ENCODE measurements at regions of chr19 and their contacts with region 1.

Region 1: GRCh38 chr19:13880059-13881043 is 3.4 kb downstream of the NANOS3 start:
- DNase-seq: peak; percentile 95 to 96 (median 96)
- H3K4me3 ChIP-seq: peak overlapping the region in 1 of 2 donors; percentile 25
- H3K4me3 Mint-ChIP-seq: peak overlapping the region; percentile 56 to 85 (median 66)
- H3K27ac ChIP-seq: peak overlapping the region; percentile 64
- H3K27ac Mint-ChIP-seq: peak overlapping the region; percentile 78 to 89 (median 84)
- H3K4me1 ChIP-seq: peaks cover 39% of the 10 kb centered on the region
- H3K4me1 Mint-ChIP-seq: peaks cover 22 to 44% (median 35%) of the 10 kb centered on the region in 4 donors
- H3K27me3 ChIP-seq: no peaks in the 10 kb centered on the region
- H3K27me3 Mint-ChIP-seq: no peaks in the 10 kb centered on the region

Region 2: GRCh38 chr19:13723206-13723605 is 157.1 kb before region 1 on chr19:
- CTCF ChIA-PET with region 1: no interaction called
- POLR2A ChIA-PET with region 1: no interaction called
- intact Hi-C with region 1: no loop called
- DNase-seq: no peak
- H3K4me3 ChIP-seq: no peak overlapping the region
- H3K4me3 Mint-ChIP-seq: no peak overlapping the region
- H3K27ac ChIP-seq: no peak overlapping the region
- H3K27ac Mint-ChIP-seq: no peak overlapping the region
- H3K4me1 ChIP-seq: no peaks in the 10 kb centered on the region
- H3K4me1 Mint-ChIP-seq: no peaks in the 10 kb centered on the region
- H3K27me3 ChIP-seq: no peaks in the 10 kb centered on the region
- H3K27me3 Mint-ChIP-seq: peaks cover 1 to 4% of the 10 kb centered on the region in 2 donors

Region 3: DNA sequence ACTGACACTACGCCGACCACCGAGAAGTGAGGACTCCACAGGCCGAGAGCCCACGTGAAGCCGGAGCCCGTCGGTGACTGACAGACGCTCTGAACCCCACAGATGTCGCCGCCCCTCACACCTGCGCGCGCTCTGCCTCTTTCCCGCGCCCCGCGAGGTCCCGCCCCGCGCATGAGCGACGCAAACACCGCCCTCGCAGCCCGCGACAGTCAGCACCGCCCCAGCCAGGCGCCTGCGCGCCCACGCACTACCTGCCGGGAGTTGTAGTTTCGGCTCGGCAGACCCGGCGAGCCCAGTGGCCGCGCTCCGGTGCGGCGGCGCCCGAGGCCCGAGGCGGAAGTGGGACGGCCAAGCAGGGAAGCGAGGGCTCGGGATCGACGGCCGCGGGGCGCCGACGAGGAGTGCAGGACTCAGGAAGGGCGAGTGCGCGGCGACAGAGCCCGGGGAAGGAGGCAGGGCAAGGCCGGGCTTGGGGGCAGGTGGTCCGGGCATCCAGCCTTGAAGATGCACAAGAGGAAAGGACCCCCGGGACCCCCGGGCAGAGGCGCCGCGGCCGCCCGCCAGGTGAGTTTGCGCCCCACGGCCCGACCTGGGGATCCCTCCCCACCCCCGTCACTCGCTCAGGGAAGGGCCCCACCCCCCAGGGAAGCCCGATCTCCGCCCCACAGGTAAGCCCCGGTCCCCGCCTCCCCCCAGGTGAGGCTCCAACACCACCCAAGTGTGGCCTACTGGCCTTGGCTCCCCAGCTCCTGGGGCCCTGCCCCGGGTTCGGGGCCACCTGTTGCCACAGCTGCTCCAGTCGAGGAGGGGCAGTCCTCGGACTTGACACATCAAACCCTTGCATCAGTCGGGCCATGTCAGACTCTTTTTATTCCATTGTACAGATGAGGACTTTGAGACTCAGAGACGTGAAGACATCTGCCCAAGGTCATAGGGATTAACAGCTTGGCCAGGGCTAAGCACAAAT is 25.9 kb after region 1 on chr19 and contains the starts of genes BRME1 and CC2D1A:
- CTCF ChIA-PET with region 1: interaction called, 8 read pairs
- POLR2A ChIA-PET with region 1: interaction called, 6 read pairs
- intact Hi-C with region 1: loop called (anchors 1 kb)
- DNase-seq: peak; percentile 91 to 92 (median 92)
- H3K4me3 ChIP-seq: peak within 1 kb of the TSS; percentile 34 to 79
- H3K4me3 Mint-ChIP-seq: peak within 1 kb of the TSS; percentile 82 to 93 (median 88)
- H3K27ac ChIP-seq: peak within 1 kb of the TSS; percentile 77
- H3K27ac Mint-ChIP-seq: peak within 1 kb of the TSS; percentile 73 to 98 (median 94)
- H3K4me1 ChIP-seq: peaks cover 15% of the 10 kb centered on the region
- H3K4me1 Mint-ChIP-seq: peaks cover 10 to 21% (median 13%) of the 10 kb centered on the region in 4 donors
- H3K27me3 ChIP-seq: no peaks in the 10 kb centered on the region
- H3K27me3 Mint-ChIP-seq: no peaks in the 10 kb centered on the region
- total RNA-seq, gene BRME1: 3.1 to 3.8 TPM
- total RNA-seq, gene CC2D1A: 32.9 to 37.1 TPM

Region 4: GRCh38 chr19:14006243-14006765 is 126.0 kb after region 1 on chr19 and contains the start of gene RFX1:
- CTCF ChIA-PET with region 1: no interaction called
- POLR2A ChIA-PET with region 1: interaction called, 8 read pairs
- intact Hi-C with region 1: loop called (anchors 1 kb)
- DNase-seq: peak; percentile 100
- H3K4me3 ChIP-seq: peak within 1 kb of the TSS; percentile 58 to 82
- H3K4me3 Mint-ChIP-seq: peak within 1 kb of the TSS; percentile 91 to 98 (median 96)
- H3K27ac ChIP-seq: peak within 1 kb of the TSS; percentile 99
- H3K27ac Mint-ChIP-seq: peak within 1 kb of the TSS; percentile 97 to 100 (median 100)
- H3K4me1 ChIP-seq: peaks cover 47% of the 10 kb centered on the region
- H3K4me1 Mint-ChIP-seq: peaks cover 29 to 51% (median 39%) of the 10 kb centered on the region in 4 donors
- H3K27me3 ChIP-seq: no peaks in the 10 kb centered on the region
- H3K27me3 Mint-ChIP-seq: peaks cover 0 to 2% of the 10 kb centered on the region in 2 donors
- total RNA-seq, gene RFX1: 17.4 to 17.8 TPM

Region 5: GRCh38 chr19:14059093-14059480 is 178.7 kb after region 1 on chr19:
- CTCF ChIA-PET with region 1: interaction called, 14 read pairs
- POLR2A ChIA-PET with region 1: interaction called, 4 read pairs
- intact Hi-C with region 1: no loop called
- DNase-seq: peak in 4 of 5 donors; percentile 20 to 43 (median 42)
- H3K4me3 ChIP-seq: no peak overlapping the region
- H3K4me3 Mint-ChIP-seq: peak overlapping the region in 7 of 8 donors; percentile 42 to 84 (median 61)
- H3K27ac ChIP-seq: no peak overlapping the region
- H3K27ac Mint-ChIP-seq: peak overlapping the region in 1 of 7 donors; percentile 40
- H3K4me1 ChIP-seq: peaks cover 18% of the 10 kb centered on the region
- H3K4me1 Mint-ChIP-seq: peaks cover 9 to 28% (median 16%) of the 10 kb centered on the region in 4 donors
- H3K27me3 ChIP-seq: peaks cover 17% of the 10 kb centered on the region
- H3K27me3 Mint-ChIP-seq: peaks cover 13 to 22% of the 10 kb centered on the region in 2 donors

Region 6: DNA sequence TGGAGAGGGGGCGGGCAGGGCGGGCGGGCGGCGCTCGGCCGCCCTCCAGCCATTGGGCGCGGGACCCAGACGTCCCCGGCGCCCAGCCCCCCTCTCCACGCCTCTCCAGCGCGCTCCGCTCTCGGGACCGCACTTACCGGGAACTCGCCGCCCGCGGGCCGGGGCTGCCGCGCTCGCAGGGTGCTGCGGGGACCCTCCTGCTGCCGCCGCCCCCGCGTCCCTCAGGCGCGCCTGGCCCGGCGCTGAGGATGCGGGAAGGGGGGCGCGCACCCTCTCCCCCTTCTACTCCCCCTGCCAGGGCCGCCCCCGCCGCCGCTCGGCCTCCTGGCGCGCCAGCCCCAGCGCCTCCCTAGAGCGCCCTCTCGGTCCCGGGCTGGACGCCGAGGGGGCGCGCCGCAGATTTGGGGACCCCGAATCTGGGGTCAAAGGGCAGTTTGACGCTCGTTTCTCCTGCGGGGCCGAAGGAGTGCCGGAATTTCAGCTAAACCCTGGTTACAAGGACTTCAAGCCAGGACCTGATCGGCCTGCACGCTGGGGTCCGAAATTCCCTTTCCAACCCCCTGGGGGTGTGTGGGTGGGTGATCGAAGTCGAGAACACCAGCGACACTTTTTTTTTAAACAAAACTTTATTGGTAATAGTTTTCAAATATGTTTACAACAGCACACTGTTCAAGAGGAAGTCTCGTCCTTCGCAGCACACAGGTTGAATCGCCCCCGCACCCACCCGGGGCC is 210.9 kb after region 1 on chr19:
- CTCF ChIA-PET with region 1: no interaction called
- POLR2A ChIA-PET with region 1: interaction called, 3 read pairs
- intact Hi-C with region 1: loop called (anchors 1 kb)
- DNase-seq: peak; percentile 79 to 84 (median 80)
- H3K4me3 ChIP-seq: peak overlapping the region; percentile 86 to 88
- H3K4me3 Mint-ChIP-seq: peak overlapping the region; percentile 99 to 100 (median 100)
- H3K27ac ChIP-seq: peak overlapping the region; percentile 72
- H3K27ac Mint-ChIP-seq: peak overlapping the region; percentile 95 to 100 (median 99)
- H3K4me1 ChIP-seq: peaks cover 14% of the 10 kb centered on the region
- H3K4me1 Mint-ChIP-seq: peaks cover 10 to 28% (median 21%) of the 10 kb centered on the region in 4 donors
- H3K27me3 ChIP-seq: no peaks in the 10 kb centered on the region
- H3K27me3 Mint-ChIP-seq: peaks cover 0 to 2% of the 10 kb centered on the region in 2 donors

Region 7: DNA sequence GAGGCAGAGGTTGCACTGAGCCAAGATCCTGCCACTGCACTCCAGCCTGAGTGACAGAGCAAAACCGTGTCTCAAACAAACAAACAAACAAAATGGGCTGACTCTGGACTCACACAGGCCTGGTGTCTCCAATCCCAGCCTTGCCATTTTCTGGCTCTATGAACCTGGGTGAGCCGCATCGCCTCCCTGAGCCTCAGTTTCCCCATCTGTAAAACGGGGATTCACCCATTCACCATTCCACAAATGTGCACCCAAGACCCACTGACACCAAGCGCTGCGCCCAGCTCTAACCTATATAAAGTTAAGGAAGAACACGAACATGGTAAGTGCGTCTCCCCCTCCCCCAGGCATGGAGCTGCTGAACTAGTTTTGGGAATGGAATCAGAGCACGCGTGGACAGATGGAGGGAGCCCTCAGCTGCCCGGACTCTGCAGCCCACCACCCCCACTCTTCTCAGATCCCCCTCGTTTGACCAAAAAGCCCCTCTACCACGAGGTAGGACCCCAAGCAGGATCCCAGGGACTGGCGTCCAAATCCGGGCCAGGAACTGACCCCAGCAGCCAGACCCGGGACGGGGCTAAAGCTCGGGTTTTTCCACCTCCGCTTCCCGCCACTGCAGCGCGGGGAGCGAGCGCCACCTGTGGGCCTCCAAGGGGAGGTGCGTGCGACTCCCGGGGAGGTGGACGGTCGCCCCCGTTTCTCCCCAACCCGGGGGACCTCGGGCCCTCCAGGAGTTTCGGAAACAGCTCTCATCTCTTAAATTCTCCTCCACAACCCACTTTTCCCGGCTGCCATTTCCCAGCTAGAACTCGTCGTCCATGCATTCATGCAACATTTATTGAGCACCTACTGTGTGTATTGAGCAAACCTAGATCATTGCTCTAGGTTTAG is 467.9 kb after region 1 on chr19:
- CTCF ChIA-PET with region 1: interaction called, 5 read pairs
- POLR2A ChIA-PET with region 1: no interaction called
- intact Hi-C with region 1: loop called (anchors 5 kb)
- DNase-seq: peak; percentile 49 to 66 (median 59)
- H3K4me3 ChIP-seq: no peak overlapping the region
- H3K4me3 Mint-ChIP-seq: peak overlapping the region; percentile 48 to 72 (median 68)
- H3K27ac ChIP-seq: no peak overlapping the region
- H3K27ac Mint-ChIP-seq: peak overlapping the region in 3 of 7 donors; percentile 19 to 62 (median 22)
- H3K4me1 ChIP-seq: peaks cover 27% of the 10 kb centered on the region
- H3K4me1 Mint-ChIP-seq: peaks cover 9 to 28% (median 17%) of the 10 kb centered on the region in 4 donors
- H3K27me3 ChIP-seq: no peaks in the 10 kb centered on the region
- H3K27me3 Mint-ChIP-seq: no peaks in the 10 kb centered on the region